Natural killer cell (primary cell): ENCODE measurements at regions of chr18 and their contacts with region 1.

Region 1: GRCh38 chr18:292271-292670 is 24.4 kb upstream of the THOC1 start:
- DNase-seq: no peak
- ATAC-seq: no peak
- H3K4me3 ChIP-seq: no peak overlapping the region
- H3K4me3 Mint-ChIP-seq: no peak overlapping the region
- H3K27ac ChIP-seq: no peak overlapping the region
- H3K27ac Mint-ChIP-seq: no peak overlapping the region
- H3K4me1 ChIP-seq: no peaks in the 10 kb centered on the region
- H3K4me1 Mint-ChIP-seq: no peaks in the 10 kb centered on the region
- H3K27me3 ChIP-seq: no peaks in the 10 kb centered on the region
- H3K27me3 Mint-ChIP-seq: peaks cover 13 to 16% of the 10 kb centered on the region in 2 donors
- CTCF ChIP-seq: no peak

Region 2: DNA sequence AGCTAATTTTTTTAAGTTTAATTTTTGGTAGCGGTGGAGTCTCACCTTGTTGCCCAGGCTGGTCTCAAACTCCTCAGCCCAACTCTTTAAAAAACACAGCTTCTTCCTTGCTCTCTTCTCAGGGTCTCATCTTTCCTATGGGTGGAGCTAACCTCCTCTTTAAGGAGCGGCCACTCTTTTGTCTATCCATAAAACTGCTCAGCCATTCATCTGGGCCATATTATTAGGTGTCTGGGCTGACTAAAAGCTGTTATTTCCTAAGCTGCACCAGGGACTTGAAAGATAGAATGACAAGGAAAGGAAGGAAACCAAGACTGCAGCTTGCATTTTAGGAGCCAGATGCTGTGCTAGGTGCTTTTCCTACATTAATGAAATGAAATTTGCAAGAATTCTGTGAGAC is 11.3 kb after region 1 on chr18:
- intact Hi-C with region 1: loop called (anchors 1 kb)
- DNase-seq: no peak
- ATAC-seq: no peak
- H3K4me3 ChIP-seq: no peak overlapping the region
- H3K4me3 Mint-ChIP-seq: no peak overlapping the region
- H3K27ac ChIP-seq: no peak overlapping the region
- H3K27ac Mint-ChIP-seq: no peak overlapping the region
- H3K4me1 ChIP-seq: no peaks in the 10 kb centered on the region
- H3K4me1 Mint-ChIP-seq: no peaks in the 10 kb centered on the region
- H3K27me3 ChIP-seq: no peaks in the 10 kb centered on the region
- H3K27me3 Mint-ChIP-seq: peaks cover 7 to 37% of the 10 kb centered on the region in 2 donors
- CTCF ChIP-seq: no peak

Region 3: GRCh38 chr18:394997-395383 is 102.7 kb after region 1 on chr18:
- intact Hi-C with region 1: no loop called
- DNase-seq: no peak
- ATAC-seq: no peak
- H3K4me3 ChIP-seq: no peak overlapping the region
- H3K4me3 Mint-ChIP-seq: no peak overlapping the region
- H3K27ac ChIP-seq: no peak overlapping the region
- H3K27ac Mint-ChIP-seq: no peak overlapping the region
- H3K4me1 ChIP-seq: no peaks in the 10 kb centered on the region
- H3K4me1 Mint-ChIP-seq: no peaks in the 10 kb centered on the region
- H3K27me3 ChIP-seq: no peaks in the 10 kb centered on the region
- H3K27me3 Mint-ChIP-seq: peaks cover 6 to 7% of the 10 kb centered on the region in 2 donors
- CTCF ChIP-seq: no peak